ENCODE measurements at regions of chr18 and their contacts with region 1.

Region 1: GRCh38 chr18:4405965-4406364 is 49.1 kb downstream of the DLGAP1 start:
- DNase-seq: no peak
- ATAC-seq: no peak
- H3K4me3 ChIP-seq: no peak overlapping the region
- H3K27ac ChIP-seq: no peak overlapping the region
- H3K4me1 ChIP-seq: peaks cover 0 to 1% of the 10 kb centered on the region in 2 donors
- H3K27me3 ChIP-seq: no peaks in the 10 kb centered on the region

Region 2: GRCh38 chr18:4358618-4359017 is 47.3 kb before region 1 on chr18:
- intact Hi-C with region 1: loop called in 1 of 2 experiments (anchors 5 kb)
- DNase-seq: no peak
- ATAC-seq: no peak
- H3K4me3 ChIP-seq: no peak overlapping the region
- H3K27ac ChIP-seq: no peak overlapping the region
- H3K4me1 ChIP-seq: no peaks in the 10 kb centered on the region
- H3K27me3 ChIP-seq: no peaks in the 10 kb centered on the region